ENCODE measurements at regions of chr2 and their contacts with region 1.

Region 1: DNA sequence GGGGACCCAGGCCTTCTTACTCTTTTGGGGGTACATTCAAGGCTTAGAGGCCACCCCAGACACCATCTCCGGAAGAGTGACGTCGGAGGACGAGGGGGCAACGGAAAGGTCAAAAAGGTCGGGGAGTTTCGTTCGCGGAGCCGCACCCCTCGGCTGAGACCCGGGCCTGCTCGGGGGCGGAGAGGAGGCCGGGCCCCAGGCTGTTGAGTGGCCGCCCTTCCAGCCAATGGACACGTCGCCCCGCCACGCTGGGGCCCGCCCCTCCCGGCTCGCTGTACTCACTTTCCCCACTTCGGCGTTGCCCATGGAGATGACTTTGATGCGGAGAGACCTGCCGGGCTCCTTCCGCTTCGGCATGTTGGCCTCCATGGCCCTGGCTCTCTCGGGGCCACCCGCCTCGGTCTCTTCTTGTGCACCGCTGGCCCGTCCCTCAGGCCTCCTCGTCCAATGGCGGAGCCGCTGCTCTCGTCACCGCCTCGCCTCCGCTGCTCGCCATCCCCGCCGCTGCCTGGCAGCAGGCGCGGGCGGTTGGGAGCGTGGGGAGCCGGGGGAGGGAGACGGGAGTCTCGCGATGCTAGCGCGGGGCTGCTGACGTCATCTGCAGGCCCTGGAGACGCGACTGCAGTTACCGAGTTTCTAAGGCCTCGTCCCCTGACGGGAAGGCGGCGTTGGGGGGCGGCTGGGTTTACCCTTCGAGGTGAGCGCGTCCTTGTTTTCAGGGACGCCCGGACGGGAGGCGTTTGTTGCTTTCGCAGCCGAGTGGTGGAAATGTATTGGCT is at the start of gene DNAJC27:
- DNase-seq: peak; percentile 97
- H3K4me3 Mint-ChIP-seq: peak within 1 kb of the TSS; percentile 94
- H3K27ac Mint-ChIP-seq: peak within 1 kb of the TSS; percentile 100
- H3K4me1 Mint-ChIP-seq: no peaks in the 10 kb centered on the region
- H3K27me3 Mint-ChIP-seq: no peaks in the 10 kb centered on the region
- CTCF ChIP-seq: no peak
- total RNA-seq, gene DNAJC27: 5.8 and 7.1 TPM in 2 replicates

Region 2: DNA sequence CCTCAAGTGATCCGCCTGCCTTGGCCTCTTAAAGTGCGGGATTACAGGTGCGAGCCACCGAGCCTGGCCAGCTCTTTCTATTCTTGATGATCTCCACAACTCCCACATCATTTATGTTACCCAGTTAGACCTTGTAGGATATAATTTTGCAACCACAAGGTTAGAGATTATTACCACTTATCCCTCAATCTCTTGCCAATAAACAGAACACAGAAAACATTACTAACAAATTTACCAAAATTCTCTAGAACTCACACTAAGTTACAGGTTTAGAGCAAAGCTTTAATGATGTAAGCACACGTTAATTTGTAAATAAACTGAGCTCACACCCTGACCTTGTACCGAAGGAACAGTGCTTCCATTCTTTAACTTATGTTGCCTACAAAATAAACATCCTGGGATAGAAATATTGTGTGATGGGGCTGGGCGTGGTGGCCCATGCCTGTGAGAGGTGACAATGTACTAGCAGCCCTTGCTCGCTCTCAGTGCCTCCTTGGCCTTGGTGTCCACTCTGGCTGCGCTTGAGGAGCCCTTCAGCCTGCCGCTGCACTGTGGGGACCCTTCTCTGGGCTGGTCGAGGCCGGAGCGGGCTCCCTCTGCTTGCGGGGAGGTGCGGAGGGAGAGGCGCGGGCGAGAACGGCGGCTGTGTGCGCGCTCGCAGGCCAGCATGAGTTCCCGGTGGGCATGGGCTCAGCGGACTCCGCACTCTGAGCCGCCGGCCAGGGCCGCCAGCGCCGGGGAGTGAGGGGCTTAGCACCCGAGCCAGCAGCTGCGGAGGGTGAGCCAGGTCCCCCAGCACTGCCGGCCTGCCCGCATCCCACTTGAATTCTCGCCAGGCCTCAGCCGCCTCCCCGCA is 569.3 kb before region 1 on chr2:
- CTCF ChIA-PET with region 1: no interaction called
- POLR2A ChIA-PET with region 1: no interaction called
- intact Hi-C with region 1: no loop called
- DNase-seq: no peak
- H3K4me3 Mint-ChIP-seq: no peak overlapping the region
- H3K27ac Mint-ChIP-seq: no peak overlapping the region
- H3K4me1 Mint-ChIP-seq: peaks cover 5% of the 10 kb centered on the region
- H3K27me3 Mint-ChIP-seq: no peaks in the 10 kb centered on the region
- CTCF ChIP-seq: no peak

Region 3: DNA sequence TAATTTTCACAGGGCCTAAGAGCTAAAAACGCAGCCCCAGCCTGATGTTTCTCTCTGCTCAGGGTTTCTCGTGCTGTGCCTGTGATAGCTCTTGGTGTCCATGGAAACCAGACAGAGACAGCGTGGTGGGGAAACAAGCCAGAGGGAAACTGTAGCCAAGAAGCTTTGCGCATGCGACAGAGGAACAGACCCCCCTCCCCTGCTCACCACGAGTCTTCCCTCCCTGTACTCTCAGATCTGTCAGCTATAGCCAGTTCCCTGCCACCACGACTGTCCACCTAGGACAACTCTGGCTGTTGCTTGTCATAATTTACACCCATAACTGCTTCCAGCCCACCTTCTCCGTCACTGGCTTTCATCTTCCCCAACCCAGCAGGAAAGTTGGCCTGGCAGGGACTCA is 13.2 kb after region 1 on chr2:
- CTCF ChIA-PET with region 1: interaction called, 17 read pairs
- POLR2A ChIA-PET with region 1: interaction called, 6 read pairs
- intact Hi-C with region 1: no loop called
- DNase-seq: no peak
- H3K4me3 Mint-ChIP-seq: no peak overlapping the region
- H3K27ac Mint-ChIP-seq: no peak overlapping the region
- H3K4me1 Mint-ChIP-seq: no peaks in the 10 kb centered on the region
- H3K27me3 Mint-ChIP-seq: no peaks in the 10 kb centered on the region
- CTCF ChIP-seq: no peak

Region 4: GRCh38 chr2:24993406-24994145 is 21.9 kb after region 1 on chr2:
- CTCF ChIA-PET with region 1: interaction called, 19 read pairs
- POLR2A ChIA-PET with region 1: no interaction called
- intact Hi-C with region 1: no loop called
- DNase-seq: no peak
- H3K4me3 Mint-ChIP-seq: no peak overlapping the region
- H3K27ac Mint-ChIP-seq: no peak overlapping the region
- H3K4me1 Mint-ChIP-seq: peaks cover 6% of the 10 kb centered on the region
- H3K27me3 Mint-ChIP-seq: peaks cover 13% of the 10 kb centered on the region
- CTCF ChIP-seq: no peak

Region 5: GRCh38 chr2:25041928-25042320 is 70.2 kb after region 1 on chr2 and contains the start of gene EFR3B:
- CTCF ChIA-PET with region 1: no interaction called
- POLR2A ChIA-PET with region 1: interaction called, 10 read pairs
- intact Hi-C with region 1: loop called (anchors 5 kb)
- DNase-seq: peak; percentile 93
- H3K4me3 Mint-ChIP-seq: peak within 1 kb of the TSS; percentile 70
- H3K27ac Mint-ChIP-seq: no peak within 1 kb of the TSS
- H3K4me1 Mint-ChIP-seq: peaks cover 5% of the 10 kb centered on the region
- H3K27me3 Mint-ChIP-seq: peaks cover 37% of the 10 kb centered on the region
- CTCF ChIP-seq: no peak
- total RNA-seq, gene EFR3B: 0.09 and 0.10 TPM in 2 replicates

Region 6: DNA sequence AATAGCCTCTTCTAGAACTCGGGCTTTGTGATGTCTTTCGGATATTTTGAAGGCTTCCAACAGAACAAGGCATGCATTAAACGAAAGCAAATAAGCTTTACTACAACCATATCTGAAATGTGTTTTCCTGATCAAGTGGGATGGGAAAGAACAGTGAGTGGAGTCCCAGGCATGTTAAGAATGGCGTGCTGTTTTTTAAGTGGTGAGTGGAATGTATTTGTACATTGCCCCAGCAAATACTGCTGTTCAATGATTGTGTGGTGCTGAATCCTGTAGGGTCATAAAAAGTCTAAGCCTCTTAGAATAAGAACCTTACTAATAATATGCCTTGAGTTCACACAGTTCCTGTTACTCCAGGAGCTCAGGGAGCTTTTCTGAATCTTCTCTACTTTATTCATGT is 144.2 kb after region 1 on chr2:
- CTCF ChIA-PET with region 1: interaction called, 10 read pairs
- POLR2A ChIA-PET with region 1: interaction called, 3 read pairs
- intact Hi-C with region 1: no loop called
- DNase-seq: no peak
- H3K4me3 Mint-ChIP-seq: no peak overlapping the region
- H3K27ac Mint-ChIP-seq: no peak overlapping the region
- H3K4me1 Mint-ChIP-seq: no peaks in the 10 kb centered on the region
- H3K27me3 Mint-ChIP-seq: peaks cover 12% of the 10 kb centered on the region
- CTCF ChIP-seq: no peak

Region 7: DNA sequence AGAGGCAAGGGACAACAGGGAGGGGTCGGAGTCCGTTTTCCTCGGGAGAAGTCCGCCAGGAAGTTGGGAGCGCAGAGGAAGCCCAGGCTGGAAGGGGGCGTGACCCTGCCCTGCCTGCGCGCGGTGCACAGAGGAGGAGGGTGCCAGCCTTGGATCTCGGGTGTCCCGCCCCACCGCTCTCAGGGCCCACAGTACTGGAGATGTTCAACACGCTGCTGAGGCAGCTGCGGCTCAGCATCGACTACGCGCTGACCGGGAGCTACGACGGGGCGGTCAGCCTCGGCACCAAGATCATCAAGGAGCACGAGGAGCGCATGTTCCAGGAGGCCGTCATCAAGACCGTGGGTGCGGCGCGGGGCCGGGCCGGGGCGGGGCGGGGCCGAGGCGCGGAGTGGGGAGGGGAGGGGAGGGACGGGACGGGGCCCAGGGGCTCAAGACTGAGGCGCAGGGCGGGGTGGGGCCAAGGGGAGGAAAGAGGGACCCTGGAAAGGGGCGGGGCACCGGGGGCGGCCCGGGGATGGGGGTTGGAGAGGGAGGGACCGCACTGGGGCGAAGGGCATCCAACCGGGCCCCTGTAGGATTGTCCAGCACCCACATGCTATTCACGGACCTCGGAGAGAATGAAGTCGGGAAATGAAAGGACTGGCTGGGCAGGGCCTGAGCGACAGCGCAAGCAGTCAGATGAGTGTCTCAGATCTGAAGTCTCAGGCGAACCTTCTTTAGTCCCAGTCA is 160.0 kb after region 1 on chr2:
- CTCF ChIA-PET with region 1: interaction called, 100 read pairs
- POLR2A ChIA-PET with region 1: interaction called, 9 read pairs
- intact Hi-C with region 1: loop called (anchors 1 kb)
- DNase-seq: no peak
- H3K4me3 Mint-ChIP-seq: no peak overlapping the region
- H3K27ac Mint-ChIP-seq: no peak overlapping the region
- H3K4me1 Mint-ChIP-seq: no peaks in the 10 kb centered on the region
- H3K27me3 Mint-ChIP-seq: peaks cover 67% of the 10 kb centered on the region
- CTCF ChIP-seq: no peak